Prostate gland (tissue), 2 donors: ENCODE measurements at regions of chr3 and their contacts with region 1.

Region 1: GRCh38 chr3:190883973-190884832 is 21.7 kb upstream of the GMNC start:
- DNase-seq: peak; percentile 33
- H3K4me3 ChIP-seq: no peak overlapping the region
- H3K27ac ChIP-seq: no peak overlapping the region
- H3K4me1 ChIP-seq: no peaks in the 10 kb centered on the region
- H3K27me3 ChIP-seq: no peaks in the 10 kb centered on the region
- CTCF ChIP-seq: peak; percentile 28 to 57 (median 50)
- POLR2A ChIP-seq: no peak

Region 2: DNA sequence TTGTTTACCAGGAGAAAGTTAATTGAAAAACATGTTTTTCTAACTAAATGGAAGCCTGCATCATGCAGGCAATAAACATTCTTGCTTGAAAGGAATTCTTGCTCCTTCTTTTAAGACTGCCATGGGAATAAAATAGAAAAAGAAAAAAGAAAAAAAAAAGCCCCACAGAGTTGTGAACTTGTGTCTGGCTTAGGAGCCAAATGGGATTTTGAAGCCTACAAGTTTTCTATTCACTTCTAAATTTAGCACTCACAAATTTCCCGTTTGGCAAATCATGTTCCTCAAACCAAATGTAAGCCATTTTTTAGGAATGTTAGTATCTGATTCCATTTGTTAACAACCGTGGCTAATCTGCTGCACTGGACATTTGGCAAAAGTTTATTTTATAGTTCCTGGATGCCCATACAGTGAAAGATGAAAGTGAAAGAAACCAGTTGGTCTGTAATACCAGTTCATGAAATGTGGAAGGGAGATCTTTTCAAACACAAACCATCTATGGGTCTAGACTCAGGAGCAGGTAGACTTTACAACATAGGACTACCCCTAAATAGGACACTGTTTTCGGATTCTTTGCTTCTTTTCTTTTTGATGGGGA is 112.1 kb after region 1 on chr3:
- intact Hi-C with region 1: no loop called
- DNase-seq: no peak
- H3K4me3 ChIP-seq: no peak overlapping the region
- H3K27ac ChIP-seq: no peak overlapping the region
- H3K4me1 ChIP-seq: no peaks in the 10 kb centered on the region
- H3K27me3 ChIP-seq: no peaks in the 10 kb centered on the region
- CTCF ChIP-seq: no peak
- POLR2A ChIP-seq: no peak

Region 3: DNA sequence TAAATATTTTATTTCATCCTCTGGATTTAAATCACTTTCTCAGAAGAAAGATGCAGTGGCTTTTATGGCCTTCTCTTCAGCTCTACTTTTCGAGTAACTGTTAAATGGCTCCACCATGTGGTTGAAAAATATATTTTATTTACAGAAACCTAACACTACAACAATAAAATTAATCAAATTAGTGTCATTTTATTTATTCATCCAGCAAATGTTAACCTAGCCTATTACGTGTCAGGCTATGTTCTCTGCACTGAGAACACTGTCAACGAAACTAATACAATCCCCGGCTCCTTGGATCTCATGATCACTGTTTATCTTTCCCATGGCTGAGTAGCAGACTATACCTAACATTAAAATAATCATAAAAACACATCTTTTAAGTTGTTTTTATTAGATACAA is 166.8 kb after region 1 on chr3:
- intact Hi-C with region 1: loop called (anchors 5 kb)
- DNase-seq: no peak
- H3K4me3 ChIP-seq: no peak overlapping the region
- H3K27ac ChIP-seq: no peak overlapping the region
- H3K4me1 ChIP-seq: no peaks in the 10 kb centered on the region
- H3K27me3 ChIP-seq: no peaks in the 10 kb centered on the region
- CTCF ChIP-seq: peak in 3 of 4 experiments; percentile 54 to 68 (median 61)
- POLR2A ChIP-seq: no peak

Region 4: DNA sequence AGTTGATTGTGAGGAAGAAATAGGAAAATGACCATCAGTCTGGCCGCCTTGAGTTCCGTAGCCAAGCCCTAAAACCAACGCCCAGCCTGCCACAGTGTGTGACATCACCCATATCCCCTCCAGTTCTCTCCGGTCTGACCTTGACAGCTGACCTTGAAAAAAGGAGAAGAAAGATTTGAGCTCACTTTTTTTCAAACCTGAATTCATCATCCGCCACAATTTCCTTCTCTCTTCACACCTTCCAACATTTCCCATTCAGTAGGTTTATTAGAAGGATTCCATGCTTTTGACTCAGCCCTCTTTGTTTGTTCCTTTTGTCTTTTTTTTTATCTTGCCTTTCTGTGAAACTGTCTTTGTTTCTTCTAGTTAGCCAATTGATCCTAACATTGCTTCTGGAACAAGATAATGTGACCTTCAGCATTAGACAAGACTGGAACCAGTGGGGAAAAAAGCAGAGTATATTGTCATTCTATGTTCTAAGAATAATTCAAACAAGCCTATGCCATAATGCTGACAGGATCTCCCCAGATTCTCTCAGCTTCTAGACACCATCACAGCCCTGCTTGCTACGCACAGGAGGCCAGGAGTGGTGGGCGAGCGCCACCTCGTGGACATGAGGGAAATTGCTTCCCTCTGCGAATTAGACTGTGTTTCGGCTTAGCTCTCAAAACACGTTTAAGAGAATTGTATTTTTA is 1560.0 kb after region 1 on chr3:
- intact Hi-C with region 1: loop called (anchors 10 kb)
- DNase-seq: peak; percentile 42
- H3K4me3 ChIP-seq: no peak overlapping the region
- H3K27ac ChIP-seq: no peak overlapping the region
- H3K4me1 ChIP-seq: no peaks in the 10 kb centered on the region
- H3K27me3 ChIP-seq: peaks cover 2% of the 10 kb centered on the region
- CTCF ChIP-seq: peak; percentile 75 to 92 (median 86)
- POLR2A ChIP-seq: no peak